Activated CD8-positive, alpha-beta memory T cell treated with anti-CD3 and anti-CD28 coated beads, Interleukin-2, amount 10 ng/mL, durations not matched to agents 7 days and 5 days (primary cell): ENCODE measurements at regions of chr16 and their contacts with region 1.

Region 1: GRCh38 chr16:31440516-31441184 is 1.9 kb downstream of the ZNF843 start:
- DNase-seq: no peak
- ATAC-seq: no peak
- H3K4me3 Mint-ChIP-seq: no peak overlapping the region
- H3K27ac Mint-ChIP-seq: no peak overlapping the region
- H3K4me1 Mint-ChIP-seq: peaks cover 34% of the 10 kb centered on the region
- H3K27me3 Mint-ChIP-seq: peaks cover 3% of the 10 kb centered on the region

Region 2: DNA sequence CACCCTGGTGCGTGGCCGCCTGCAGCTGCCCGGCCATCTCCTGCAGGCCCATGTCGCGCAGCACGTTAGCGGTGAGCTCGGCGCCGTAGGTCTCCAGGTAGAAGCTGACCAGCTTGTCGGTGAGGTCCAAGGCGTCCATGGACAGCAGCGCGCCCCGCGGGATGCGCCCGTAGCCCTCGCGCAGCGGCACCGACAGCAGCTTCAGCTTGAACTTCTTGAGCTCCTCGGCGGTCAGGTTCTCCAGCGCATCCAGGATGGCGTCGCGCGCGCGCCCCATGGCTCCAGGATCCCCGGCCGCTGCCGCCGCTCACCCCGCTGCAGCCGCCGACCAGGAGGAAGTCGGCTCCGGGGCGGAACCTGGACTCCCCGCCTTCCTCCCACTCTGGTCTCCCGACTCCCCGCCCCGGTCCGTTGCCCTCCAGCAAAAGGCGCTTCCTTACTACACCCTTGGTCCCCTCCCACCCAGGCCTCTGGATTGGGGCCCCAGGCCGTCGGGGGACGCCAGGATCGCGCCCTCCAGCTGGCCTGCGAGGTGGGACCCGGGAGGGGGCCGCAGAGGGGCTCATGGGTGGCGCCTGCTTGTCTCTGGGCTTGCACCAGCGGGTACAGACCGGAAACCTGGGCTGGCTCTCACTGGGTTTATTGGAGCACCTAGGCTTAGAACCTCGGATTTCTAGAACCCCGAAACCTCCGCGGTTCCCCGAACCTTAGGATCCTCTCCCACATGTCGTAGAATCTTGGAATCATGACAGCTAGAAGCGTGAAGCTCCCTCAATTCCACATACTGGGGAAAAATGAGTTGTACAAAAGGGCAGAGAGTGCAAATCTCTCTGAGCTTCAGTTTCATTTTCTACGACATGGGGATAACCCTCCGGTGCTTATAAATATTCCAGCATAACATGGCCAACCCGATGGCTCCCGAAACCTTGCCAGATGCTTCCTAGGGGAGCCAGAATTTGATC is 238.0 kb before region 1 on chr16 and contains the start of gene PYCARD:
- CTCF ChIA-PET with region 1: interaction called, 31 read pairs
- DNase-seq: peak; percentile 64
- ATAC-seq: peak; percentile 43
- H3K4me3 Mint-ChIP-seq: peak within 1 kb of the TSS; percentile 90
- H3K27ac Mint-ChIP-seq: peak within 1 kb of the TSS; percentile 79
- H3K4me1 Mint-ChIP-seq: peaks cover 58% of the 10 kb centered on the region
- H3K27me3 Mint-ChIP-seq: peaks cover 7% of the 10 kb centered on the region
- total RNA-seq, gene PYCARD: 55.4 to 99.1 TPM

Region 3: GRCh38 chr16:31215287-31216162 is 225.1 kb before region 1 on chr16:
- CTCF ChIA-PET with region 1: interaction called, 12 read pairs
- DNase-seq: no peak
- ATAC-seq: peak; percentile 53
- H3K4me3 Mint-ChIP-seq: peak overlapping the region; percentile 28
- H3K27ac Mint-ChIP-seq: no peak overlapping the region
- H3K4me1 Mint-ChIP-seq: peaks cover 30% of the 10 kb centered on the region
- H3K27me3 Mint-ChIP-seq: peaks cover 55% of the 10 kb centered on the region

Region 4: GRCh38 chr16:31382485-31383161 is 58.0 kb before region 1 on chr16:
- CTCF ChIA-PET with region 1: interaction called, 20 read pairs
- DNase-seq: peak; percentile 81
- ATAC-seq: peak; percentile 81
- H3K4me3 Mint-ChIP-seq: no peak overlapping the region
- H3K27ac Mint-ChIP-seq: no peak overlapping the region
- H3K4me1 Mint-ChIP-seq: peaks cover 35% of the 10 kb centered on the region
- H3K27me3 Mint-ChIP-seq: peaks cover 4% of the 10 kb centered on the region

Region 5: GRCh38 chr16:31421587-31421986 is 19.1 kb before region 1 on chr16:
- CTCF ChIA-PET with region 1: interaction called, 23 read pairs
- DNase-seq: peak; percentile 95
- ATAC-seq: peak; percentile 88
- H3K4me3 Mint-ChIP-seq: peak overlapping the region; percentile 18
- H3K27ac Mint-ChIP-seq: peak overlapping the region; percentile 94
- H3K4me1 Mint-ChIP-seq: peaks cover 73% of the 10 kb centered on the region
- H3K27me3 Mint-ChIP-seq: peaks cover 10% of the 10 kb centered on the region

Region 6: DNA sequence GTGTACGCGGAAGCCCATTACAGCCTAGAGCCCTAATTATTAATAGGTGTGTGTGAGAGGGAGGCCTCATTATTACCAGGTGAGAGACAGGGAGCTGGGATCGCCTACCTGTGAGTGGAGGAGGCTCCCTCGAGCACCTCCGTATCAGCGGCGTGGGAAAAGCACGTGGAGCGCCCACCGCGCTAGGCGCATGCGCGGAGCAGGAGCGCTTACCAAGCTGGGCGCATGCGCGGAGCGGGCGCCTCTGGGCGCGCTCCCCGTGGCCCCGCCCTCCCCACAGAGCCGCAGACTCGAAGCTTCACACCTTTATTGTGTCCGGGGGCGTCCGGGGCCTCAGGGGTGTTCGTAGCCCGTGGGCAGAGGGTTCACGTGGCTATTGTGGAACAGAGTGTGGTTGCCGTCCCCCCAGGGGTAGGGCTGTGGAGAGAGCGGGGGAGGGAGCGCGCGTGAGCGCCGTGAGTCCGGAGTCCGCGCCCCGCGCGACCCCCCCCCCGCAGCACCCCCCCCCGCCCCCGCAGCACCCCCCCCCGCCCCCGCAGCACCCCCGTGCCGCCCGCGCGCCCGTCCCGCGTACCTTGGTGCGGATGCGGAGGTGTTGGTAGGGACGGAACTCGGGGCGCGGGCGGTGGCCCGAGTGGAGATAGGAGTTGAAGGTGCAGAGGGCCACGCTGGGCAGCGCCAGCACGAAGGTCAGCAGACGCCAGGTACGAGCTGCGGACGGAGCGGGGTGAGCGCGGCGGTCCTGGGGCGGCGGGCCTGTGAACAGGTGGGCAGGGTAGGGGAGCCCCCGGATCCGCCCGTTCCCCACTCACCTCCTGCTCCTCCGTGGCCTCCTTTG is 13.0 kb before region 1 on chr16:
- CTCF ChIA-PET with region 1: interaction called, 23 read pairs
- DNase-seq: peak; percentile 66
- ATAC-seq: peak; percentile 51
- H3K4me3 Mint-ChIP-seq: no peak overlapping the region
- H3K27ac Mint-ChIP-seq: no peak overlapping the region
- H3K4me1 Mint-ChIP-seq: peaks cover 57% of the 10 kb centered on the region
- H3K27me3 Mint-ChIP-seq: peaks cover 13% of the 10 kb centered on the region

Region 7: GRCh38 chr16:31458844-31459721 is 18.4 kb after region 1 on chr16 and contains the start of gene ARMC5:
- CTCF ChIA-PET with region 1: interaction called, 21 read pairs
- DNase-seq: peak; percentile 99
- ATAC-seq: peak; percentile 73
- H3K4me3 Mint-ChIP-seq: peak within 1 kb of the TSS; percentile 89
- H3K27ac Mint-ChIP-seq: peak within 1 kb of the TSS; percentile 95
- H3K4me1 Mint-ChIP-seq: peaks cover 47% of the 10 kb centered on the region
- H3K27me3 Mint-ChIP-seq: no peaks in the 10 kb centered on the region
- total RNA-seq, gene ARMC5: 19.2 to 22.2 TPM

Region 8: GRCh38 chr16:31537362-31538242 is 97.0 kb after region 1 on chr16:
- CTCF ChIA-PET with region 1: no interaction called
- DNase-seq: no peak
- ATAC-seq: no peak
- H3K4me3 Mint-ChIP-seq: no peak overlapping the region
- H3K27ac Mint-ChIP-seq: no peak overlapping the region
- H3K4me1 Mint-ChIP-seq: no peaks in the 10 kb centered on the region
- H3K27me3 Mint-ChIP-seq: peaks cover 34% of the 10 kb centered on the region